Heart right ventricle (tissue), 16 donors: ENCODE measurements at regions of chr7 and their contacts with region 1.

Region 1: GRCh38 chr7:142811154-142811737 is 40.5 kb downstream of the PRSS2 start:
- DNase-seq: no peak
- ATAC-seq: no peak
- H3K4me3 ChIP-seq: no peak overlapping the region
- H3K27ac ChIP-seq: peak overlapping the region in 1 of 10 donors; percentile 68
- H3K4me1 ChIP-seq: no peaks in the 10 kb centered on the region
- H3K27me3 ChIP-seq: peaks cover 0 to 94% (median 38%) of the 10 kb centered on the region in 7 donors
- CTCF ChIP-seq: peak in 8 of 9 donors; percentile 35 to 63 (median 56)

Region 2: DNA sequence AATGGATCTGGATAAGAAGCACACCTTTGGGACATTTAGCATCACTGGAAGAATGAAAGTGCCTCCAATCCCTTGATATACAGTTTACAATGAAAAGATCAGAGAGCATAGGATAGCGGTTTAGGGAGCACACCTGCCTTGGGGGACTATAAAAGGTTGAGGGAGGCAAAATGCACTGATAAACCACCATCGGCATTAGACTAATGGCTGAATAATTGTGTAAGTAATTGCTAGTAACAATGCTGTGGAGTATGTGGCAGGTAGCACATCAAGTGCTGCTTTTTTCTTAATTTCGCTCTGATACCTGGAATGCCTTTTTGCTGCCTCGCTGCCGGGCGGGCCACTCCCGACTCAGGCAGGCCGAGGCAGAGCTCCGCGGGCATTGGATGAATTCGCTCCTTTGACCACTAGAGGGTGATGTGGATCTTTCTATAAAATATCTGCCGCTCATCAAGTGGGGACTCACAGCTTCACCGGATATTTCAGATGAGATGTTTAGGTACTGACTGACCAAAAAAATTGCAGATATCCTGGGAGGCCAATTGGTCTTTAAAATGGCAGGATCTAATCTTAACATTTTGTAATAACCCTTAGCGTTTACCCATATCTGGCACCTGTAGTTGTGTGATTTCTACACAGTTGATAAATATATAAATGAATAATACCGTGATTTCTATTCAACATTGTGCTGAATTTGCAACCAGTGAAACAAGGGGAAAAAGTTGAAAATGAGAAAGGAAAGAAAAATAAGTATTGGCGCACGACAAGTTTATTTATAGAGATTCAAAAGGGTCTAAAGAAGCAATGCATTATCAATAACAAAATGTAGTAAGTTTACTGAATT is 178.7 kb before region 1 on chr7:
- intact Hi-C with region 1: loop called in 3 of 10 experiments (anchors 1 to 5 kb)
- DNase-seq: peak; percentile 14 to 18
- ATAC-seq: peak in 6 of 8 donors; percentile 47 to 83 (median 61)
- H3K4me3 ChIP-seq: no peak overlapping the region
- H3K27ac ChIP-seq: no peak overlapping the region
- H3K4me1 ChIP-seq: no peaks in the 10 kb centered on the region
- H3K27me3 ChIP-seq: peaks cover 0 to 84% (median 33%) of the 10 kb centered on the region in 7 donors
- CTCF ChIP-seq: peak; percentile 41 to 80 (median 77)